PC-3 (cell line): ENCODE measurements at regions of chr7 and their contacts with region 1.

Region 1: GRCh38 chr7:104971290-104972071 is 42.5 kb upstream of the KMT2E start:
- DNase-seq: peak; percentile 47
- ATAC-seq: peak; percentile 87
- H3K4me3 ChIP-seq: no peak overlapping the region
- H3K27ac ChIP-seq: peak overlapping the region; percentile 64
- H3K4me1 ChIP-seq: no peaks in the 10 kb centered on the region
- H3K27me3 ChIP-seq: no peaks in the 10 kb centered on the region
- CTCF ChIP-seq: no peak

Region 2: GRCh38 chr7:104945599-104945956 is 25.9 kb before region 1 on chr7:
- CTCF ChIA-PET with region 1: interaction called, 8 read pairs
- POLR2A ChIA-PET with region 1: no interaction called
- intact Hi-C with region 1: loop called (anchors 1 kb)
- DNase-seq: no peak
- ATAC-seq: no peak
- H3K4me3 ChIP-seq: peak overlapping the region; percentile 32; the same call in 1 of the 2 replicates
- H3K27ac ChIP-seq: peak overlapping the region; percentile 100
- H3K4me1 ChIP-seq: peaks cover 18% of the 10 kb centered on the region
- H3K27me3 ChIP-seq: no peaks in the 10 kb centered on the region
- CTCF ChIP-seq: no peak

Region 3: DNA sequence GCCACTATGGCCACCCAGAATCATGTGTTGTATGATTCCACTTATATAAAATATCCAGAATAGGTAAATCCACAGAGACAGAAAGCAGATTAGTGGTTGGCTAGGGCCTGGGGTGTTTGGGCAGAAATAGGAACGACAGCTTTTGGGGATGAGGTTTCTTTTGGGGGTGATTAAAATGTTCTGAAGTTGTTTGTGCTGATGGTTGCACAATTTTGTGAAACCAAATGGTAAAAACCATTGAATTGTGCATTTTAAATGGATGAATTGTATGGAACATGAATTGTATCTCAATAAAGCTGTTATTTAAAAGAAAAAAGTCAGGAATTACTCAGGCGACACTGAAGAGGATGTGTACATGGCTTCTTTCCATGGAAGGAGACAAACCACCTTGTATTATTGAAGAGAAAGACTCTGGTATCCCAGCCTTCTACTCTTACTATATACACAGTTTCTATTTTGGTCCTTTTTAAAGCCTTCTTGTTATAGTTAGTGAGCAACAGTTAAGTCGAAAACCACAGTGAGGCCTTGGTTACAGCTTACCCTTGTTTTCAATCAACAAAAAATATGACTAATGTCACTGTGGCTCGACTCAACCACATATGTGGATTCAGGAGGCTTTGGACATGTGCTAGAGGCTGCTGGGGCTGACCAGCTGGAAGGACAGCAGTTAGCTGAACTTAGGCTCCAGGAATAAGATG is 14.6 kb before region 1 on chr7:
- CTCF ChIA-PET with region 1: no interaction called
- POLR2A ChIA-PET with region 1: no interaction called
- intact Hi-C with region 1: loop called (anchors 2 kb)
- DNase-seq: peak; percentile 84
- ATAC-seq: peak; percentile 95
- H3K4me3 ChIP-seq: no peak overlapping the region
- H3K27ac ChIP-seq: peak overlapping the region; percentile 89
- H3K4me1 ChIP-seq: peaks cover 14% of the 10 kb centered on the region
- H3K27me3 ChIP-seq: no peaks in the 10 kb centered on the region
- CTCF ChIP-seq: no peak

Region 4: DNA sequence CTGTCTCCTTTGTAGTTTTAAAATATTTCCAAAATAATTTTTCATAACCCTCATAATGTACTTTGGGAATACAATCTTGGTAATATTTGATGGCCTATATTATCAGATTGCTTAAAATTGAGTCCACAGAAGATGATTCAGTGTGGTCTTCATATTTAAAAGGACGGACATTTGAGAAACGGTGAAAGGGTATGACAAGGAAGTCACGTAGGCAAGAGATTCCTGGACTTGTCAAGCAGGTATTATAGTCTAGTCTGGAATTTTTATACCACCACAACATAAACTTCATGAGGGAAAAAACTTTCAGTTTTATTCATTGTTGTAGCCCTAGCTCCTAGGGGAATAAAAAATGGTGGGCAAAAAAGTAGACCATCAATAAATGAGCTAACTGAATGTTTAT is 124.8 kb after region 1 on chr7:
- CTCF ChIA-PET with region 1: no interaction called
- POLR2A ChIA-PET with region 1: no interaction called
- intact Hi-C with region 1: no loop called
- DNase-seq: peak; percentile 72
- ATAC-seq: no peak
- H3K4me3 ChIP-seq: no peak overlapping the region
- H3K27ac ChIP-seq: peak overlapping the region; percentile 53
- H3K4me1 ChIP-seq: peaks cover 52% of the 10 kb centered on the region
- H3K27me3 ChIP-seq: no peaks in the 10 kb centered on the region
- CTCF ChIP-seq: no peak

Region 5: GRCh38 chr7:105224884-105225651 is 253.6 kb after region 1 on chr7:
- CTCF ChIA-PET with region 1: no interaction called
- POLR2A ChIA-PET with region 1: no interaction called
- intact Hi-C with region 1: no loop called
- DNase-seq: peak; percentile 86
- ATAC-seq: peak; percentile 98
- H3K4me3 ChIP-seq: peak overlapping the region; percentile 7; the same call in 1 of the 2 replicates
- H3K27ac ChIP-seq: peak overlapping the region; percentile 86
- H3K4me1 ChIP-seq: peaks cover 23% of the 10 kb centered on the region
- H3K27me3 ChIP-seq: no peaks in the 10 kb centered on the region
- CTCF ChIP-seq: no peak

Region 6: DNA sequence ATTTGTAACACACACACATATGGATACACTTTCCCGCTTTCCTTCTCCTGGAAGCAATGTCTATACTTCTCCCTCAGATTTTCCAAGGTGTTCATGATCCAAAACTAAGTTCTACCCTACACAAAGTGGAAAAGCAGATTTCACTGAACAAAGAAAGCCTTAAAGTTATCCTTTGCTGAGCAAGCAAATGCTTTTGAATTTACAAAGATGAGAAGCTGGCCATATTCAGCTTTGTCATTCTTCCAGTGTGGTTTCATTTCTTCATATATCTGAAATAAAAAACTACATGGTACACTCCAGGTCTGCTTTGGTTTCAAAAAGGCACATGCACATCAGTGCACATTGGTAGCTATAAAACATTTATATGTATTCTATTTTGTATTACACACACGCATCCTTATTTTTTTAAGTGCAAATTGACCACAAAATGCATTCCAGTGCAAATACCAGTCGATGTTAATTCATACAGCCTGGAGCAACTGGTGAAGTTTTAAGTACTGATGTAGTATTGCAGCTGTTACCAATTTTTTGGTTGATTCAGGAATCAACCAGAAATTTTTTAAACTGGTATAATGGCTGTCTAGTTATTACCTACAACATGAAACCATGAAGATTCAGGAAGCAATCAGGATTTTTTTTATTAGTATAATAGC is 482.7 kb after region 1 on chr7:
- CTCF ChIA-PET with region 1: no interaction called
- POLR2A ChIA-PET with region 1: interaction called, 10 read pairs
- intact Hi-C with region 1: no loop called
- DNase-seq: peak; percentile 58
- ATAC-seq: peak; percentile 93
- H3K4me3 ChIP-seq: no peak overlapping the region
- H3K27ac ChIP-seq: no peak overlapping the region
- H3K4me1 ChIP-seq: no peaks in the 10 kb centered on the region
- H3K27me3 ChIP-seq: no peaks in the 10 kb centered on the region
- CTCF ChIP-seq: no peak